HAP-1 (cell line): ENCODE measurements at regions of chr16 and their contacts with region 1.

Region 1: GRCh38 chr16:3099732-3100499 is 822 bp upstream of the ZSCAN10 start:
- DNase-seq: peak; percentile 86 to 98
- H3K4me3 ChIP-seq: no peak overlapping the region
- H3K4me1 ChIP-seq: peaks cover 22% of the 10 kb centered on the region
- H3K27me3 ChIP-seq: no peaks in the 10 kb centered on the region

Region 2: DNA sequence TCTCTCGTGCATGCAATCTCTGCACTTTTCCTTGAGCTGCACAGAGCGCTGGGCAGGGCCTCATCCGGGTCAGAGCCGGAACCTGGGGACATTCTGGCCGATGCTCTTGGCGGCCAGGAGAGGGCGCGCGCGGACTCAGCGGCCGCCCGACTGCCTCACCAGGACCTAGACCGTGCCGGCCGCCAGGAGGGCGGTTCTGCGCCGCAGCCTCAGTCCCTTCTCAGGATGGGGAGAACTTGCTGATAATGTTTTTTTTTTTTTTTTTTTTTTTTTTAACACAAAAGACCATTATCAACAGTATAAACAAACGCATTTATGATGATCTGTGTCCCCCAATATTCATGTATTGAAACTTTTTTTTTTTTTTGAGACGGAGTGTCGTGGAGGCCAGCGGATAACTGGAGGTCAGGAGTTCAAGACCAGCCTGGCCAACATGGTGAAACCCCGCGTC is 225.0 kb before region 1 on chr16:
- in situ Hi-C with region 1: no loop called
- DNase-seq: peak; percentile 78 to 84
- H3K4me3 ChIP-seq: no peak overlapping the region
- H3K4me1 ChIP-seq: no peaks in the 10 kb centered on the region; the same call in 1 of the 2 replicates
- H3K27me3 ChIP-seq: no peaks in the 10 kb centered on the region

Region 3: GRCh38 chr16:3149630-3150345 is 49.9 kb after region 1 on chr16:
- in situ Hi-C with region 1: loop called (anchors 5 kb)
- DNase-seq: peak; percentile 39 to 84
- H3K4me3 ChIP-seq: peak overlapping the region; percentile 49
- H3K4me1 ChIP-seq: peaks cover 2% of the 10 kb centered on the region; the same call in 1 of the 2 replicates
- H3K27me3 ChIP-seq: no peaks in the 10 kb centered on the region